ENCODE measurements at regions of chr10 and their contacts with region 1.

Region 1: GRCh38 chr10:8053446-8054290 is 820 bp upstream of the GATA3 start:
- DNase-seq: peak; percentile 76
- ATAC-seq: peak; percentile 75
- H3K4me3 ChIP-seq: peak overlapping the region; percentile 74
- H3K27ac ChIP-seq: peak overlapping the region; percentile 73
- H3K4me1 ChIP-seq: peaks cover 4% of the 10 kb centered on the region; the same call in 1 of the 2 replicates
- H3K27me3 ChIP-seq: no peaks in the 10 kb centered on the region
- CTCF ChIP-seq: no peak; the same call in 1 of the 2 replicates

Region 2: GRCh38 chr10:7945469-7946192 is 108.0 kb before region 1 on chr10:
- CTCF ChIA-PET with region 1: no interaction called
- POLR2A ChIA-PET with region 1: no interaction called
- intact Hi-C with region 1: loop called (anchors 2 kb)
- DNase-seq: peak; percentile 37
- ATAC-seq: peak; percentile 14
- H3K4me3 ChIP-seq: no peak overlapping the region
- H3K27ac ChIP-seq: peak overlapping the region; percentile 88
- H3K4me1 ChIP-seq: peaks cover 52% of the 10 kb centered on the region
- H3K27me3 ChIP-seq: no peaks in the 10 kb centered on the region
- CTCF ChIP-seq: no peak

Region 3: GRCh38 chr10:8159341-8160165 is 105.9 kb after region 1 on chr10:
- CTCF ChIA-PET with region 1: no interaction called
- POLR2A ChIA-PET with region 1: no interaction called
- intact Hi-C with region 1: loop called (anchors 2 kb)
- DNase-seq: peak; percentile 86
- ATAC-seq: peak; percentile 75
- H3K4me3 ChIP-seq: peak overlapping the region; percentile 47
- H3K27ac ChIP-seq: peak overlapping the region; percentile 98
- H3K4me1 ChIP-seq: peaks cover 24% of the 10 kb centered on the region
- H3K27me3 ChIP-seq: no peaks in the 10 kb centered on the region
- CTCF ChIP-seq: no peak

Region 4: GRCh38 chr10:8365935-8366911 is 312.6 kb after region 1 on chr10:
- CTCF ChIA-PET with region 1: no interaction called
- POLR2A ChIA-PET with region 1: no interaction called
- intact Hi-C with region 1: loop called (anchors 10 kb)
- DNase-seq: peak; percentile 91
- ATAC-seq: peak; percentile 86
- H3K4me3 ChIP-seq: no peak overlapping the region
- H3K27ac ChIP-seq: peak overlapping the region; percentile 97
- H3K4me1 ChIP-seq: peaks cover 26% of the 10 kb centered on the region
- H3K27me3 ChIP-seq: no peaks in the 10 kb centered on the region
- CTCF ChIP-seq: no peak

Region 5: GRCh38 chr10:8473205-8473604 is 419.5 kb after region 1 on chr10:
- CTCF ChIA-PET with region 1: interaction called, 3 read pairs
- POLR2A ChIA-PET with region 1: no interaction called
- intact Hi-C with region 1: loop called (anchors 1 kb)
- DNase-seq: peak; percentile 34
- ATAC-seq: no peak
- H3K4me3 ChIP-seq: no peak overlapping the region
- H3K27ac ChIP-seq: no peak overlapping the region
- H3K4me1 ChIP-seq: no peaks in the 10 kb centered on the region
- H3K27me3 ChIP-seq: no peaks in the 10 kb centered on the region
- CTCF ChIP-seq: peak; percentile 50

Measured in PC-3 (cell line).